ENCODE measurements at regions of chr6 and their contacts with region 1.

Region 1: GRCh38 chr6:159174263-159174969 is 5.2 kb downstream of the FNDC1 start:
- DNase-seq: peak; percentile 67
- H3K27ac ChIP-seq: no peak overlapping the region
- CTCF ChIP-seq: peak; percentile 92

Region 2: DNA sequence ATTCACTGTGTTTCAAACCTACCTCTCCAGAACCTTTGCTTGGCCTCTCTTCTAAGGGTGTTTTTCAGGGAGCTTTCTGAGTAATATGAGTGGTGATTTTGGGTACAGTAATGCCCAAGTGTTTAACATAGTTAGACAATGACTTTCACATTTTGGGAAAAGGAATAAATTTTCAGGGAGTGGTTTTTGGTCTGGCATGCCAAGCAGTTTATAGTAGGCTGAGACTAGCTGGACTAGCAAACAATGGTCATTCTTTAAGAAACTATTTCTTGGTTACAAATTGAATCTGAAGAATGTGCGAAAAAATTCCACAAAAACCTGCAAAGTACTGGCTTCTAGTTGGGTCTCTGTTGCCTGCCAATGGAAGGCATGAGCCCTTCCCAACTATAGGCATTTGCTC is 10.1 kb after region 1 on chr6:
- CTCF ChIA-PET with region 1: interaction called, 11 read pairs
- POLR2A ChIA-PET with region 1: no interaction called
- DNase-seq: no peak
- H3K27ac ChIP-seq: no peak overlapping the region
- CTCF ChIP-seq: no peak

Region 3: GRCh38 chr6:159267165-159267564 is 92.7 kb after region 1 on chr6:
- CTCF ChIA-PET with region 1: no interaction called
- POLR2A ChIA-PET with region 1: no interaction called
- DNase-seq: peak; percentile 55
- H3K27ac ChIP-seq: no peak overlapping the region
- CTCF ChIP-seq: no peak

Region 4: GRCh38 chr6:159654483-159655098 is 480.2 kb after region 1 on chr6:
- CTCF ChIA-PET with region 1: interaction called, 23 read pairs
- POLR2A ChIA-PET with region 1: no interaction called
- DNase-seq: peak; percentile 32
- H3K27ac ChIP-seq: no peak overlapping the region
- CTCF ChIP-seq: peak; percentile 51